Motor neuron (in vitro differentiated cells): ENCODE measurements at regions of chr2 and their contacts with region 1.

Region 1: DNA sequence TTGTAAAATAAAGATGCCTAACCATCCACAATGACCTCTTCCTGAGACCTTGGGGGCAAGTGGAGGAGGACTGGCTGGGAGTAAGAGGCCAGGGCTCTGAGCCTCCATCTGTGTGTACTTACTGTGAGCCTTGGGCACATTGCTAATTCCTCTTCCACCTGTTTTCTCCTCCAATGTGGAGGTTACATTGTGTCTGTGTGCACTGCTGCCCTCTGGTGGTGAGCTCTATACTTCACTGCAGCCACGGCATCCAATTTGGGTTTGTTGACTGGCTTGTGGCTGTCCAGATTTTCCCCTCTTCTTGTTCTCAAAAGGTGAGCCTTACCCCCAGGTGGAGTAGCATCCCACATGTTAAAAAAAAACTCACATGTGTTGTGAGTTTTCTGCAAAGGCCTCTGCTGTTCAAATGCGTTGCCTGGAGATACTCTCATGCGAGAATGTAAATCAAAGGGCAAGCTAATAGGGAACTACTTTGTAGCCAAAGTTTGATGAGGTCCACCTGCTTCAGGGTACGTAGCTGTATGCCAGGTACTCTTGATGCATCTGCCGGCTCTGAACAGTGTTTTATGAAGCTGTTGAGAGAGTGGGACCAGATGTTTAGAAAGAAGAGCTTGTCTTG is 80.8 kb downstream of the APOB start:
- ATAC-seq: peak; percentile 49 to 97 (median 68)
- H3K4me3 ChIP-seq: no peak overlapping the region
- H3K27ac ChIP-seq: no peak overlapping the region
- H3K4me1 ChIP-seq: no peaks in the 10 kb centered on the region

Region 2: GRCh38 chr2:20164061-20164733 is 798.9 kb before region 1 on chr2:
- in situ Hi-C with region 1: no loop called
- ATAC-seq: peak in 5 of 8 experiments; percentile 12 to 44 (median 21)
- H3K4me3 ChIP-seq: no peak overlapping the region
- H3K27ac ChIP-seq: no peak overlapping the region
- H3K4me1 ChIP-seq: peaks cover 13 to 18% of the 10 kb centered on the region in 2 donors

Region 3: GRCh38 chr2:20650880-20651730 is 311.9 kb before region 1 on chr2 and contains the start of gene HS1BP3:
- in situ Hi-C with region 1: loop called in 5 of 9 experiments (anchors 25 kb)
- ATAC-seq: peak; percentile 78 to 95 (median 92)
- H3K4me3 ChIP-seq: peak within 1 kb of the TSS; percentile 62 to 86 (median 65)
- H3K27ac ChIP-seq: peak within 1 kb of the TSS; percentile 64 to 78
- H3K4me1 ChIP-seq: peaks cover 16 to 22% of the 10 kb centered on the region in 2 donors
- total RNA-seq, gene HS1BP3: 6.8 to 29.2 (median 11.2) TPM

Region 4: DNA sequence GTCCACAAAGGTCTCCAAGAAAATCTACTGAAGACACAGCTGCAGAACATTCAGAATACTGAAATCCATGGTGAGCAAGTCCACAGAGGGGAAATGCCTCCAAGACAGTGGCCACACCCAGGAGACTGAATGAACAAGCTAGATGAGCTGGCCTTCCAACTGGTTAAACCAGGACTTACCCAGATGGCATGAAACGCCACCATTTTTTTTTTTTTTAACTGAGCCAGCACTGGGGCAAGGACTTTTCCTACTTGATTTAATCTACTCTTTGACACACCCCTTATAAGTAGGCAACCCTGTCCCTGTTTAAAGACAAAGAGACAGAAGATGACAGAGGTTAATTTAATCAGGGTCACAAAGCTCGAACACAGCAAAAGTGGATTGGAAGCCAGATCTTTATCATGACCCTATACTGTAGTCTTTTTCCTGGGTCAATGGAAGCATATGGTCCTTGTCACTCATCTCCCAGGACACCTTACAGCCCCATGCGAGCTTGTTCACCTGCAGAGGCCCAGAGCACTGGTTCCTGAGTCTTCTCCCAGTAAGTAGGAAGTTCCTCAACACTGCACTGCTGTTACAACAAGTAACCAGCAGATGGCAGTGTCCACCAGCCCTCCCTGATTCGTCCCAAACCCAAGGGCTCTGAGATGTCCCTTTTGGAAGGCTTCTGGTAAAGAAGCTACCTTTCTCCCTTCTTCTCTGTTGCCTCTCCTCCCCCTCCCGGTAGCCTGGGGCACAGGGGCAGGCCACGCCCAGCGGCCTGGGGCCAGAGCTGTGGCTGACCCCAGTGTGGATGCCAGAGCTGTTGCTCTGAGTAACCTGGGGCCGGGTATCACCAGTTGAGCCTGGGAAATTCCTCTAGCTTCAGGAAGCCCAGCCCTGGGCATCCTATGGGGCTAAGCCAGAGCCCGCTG is 301.7 kb before region 1 on chr2:
- in situ Hi-C with region 1: loop called in 8 of 9 experiments (anchors 10 to 25 kb)
- ATAC-seq: peak; percentile 48 to 86 (median 64)
- H3K4me3 ChIP-seq: no peak overlapping the region
- H3K27ac ChIP-seq: no peak overlapping the region
- H3K4me1 ChIP-seq: peaks cover 0 to 5% of the 10 kb centered on the region in 2 donors

Region 5: GRCh38 chr2:20682167-20682920 is 280.7 kb before region 1 on chr2:
- in situ Hi-C with region 1: no loop called
- ATAC-seq: peak in 2 of 8 experiments; percentile 59 to 61
- H3K4me3 ChIP-seq: no peak overlapping the region
- H3K27ac ChIP-seq: no peak overlapping the region
- H3K4me1 ChIP-seq: no peaks in the 10 kb centered on the region

Region 6: GRCh38 chr2:20781656-20782265 is 181.3 kb before region 1 on chr2:
- in situ Hi-C with region 1: loop called in 1 of 9 experiments (anchors 25 kb)
- ATAC-seq: peak in 3 of 8 experiments; percentile 44 to 64 (median 64)
- H3K4me3 ChIP-seq: no peak overlapping the region
- H3K27ac ChIP-seq: no peak overlapping the region
- H3K4me1 ChIP-seq: no peaks in the 10 kb centered on the region

Region 7: GRCh38 chr2:21251216-21251980 is 288.4 kb after region 1 on chr2:
- in situ Hi-C with region 1: no loop called
- ATAC-seq: peak in 4 of 8 experiments; percentile 32 to 69 (median 43)
- H3K4me3 ChIP-seq: no peak overlapping the region
- H3K27ac ChIP-seq: no peak overlapping the region
- H3K4me1 ChIP-seq: peaks cover 0 to 2% of the 10 kb centered on the region in 2 donors